CD4-positive, alpha-beta T cell (primary cell): ENCODE measurements at regions of chr17 and their contacts with region 1.

Region 1: DNA sequence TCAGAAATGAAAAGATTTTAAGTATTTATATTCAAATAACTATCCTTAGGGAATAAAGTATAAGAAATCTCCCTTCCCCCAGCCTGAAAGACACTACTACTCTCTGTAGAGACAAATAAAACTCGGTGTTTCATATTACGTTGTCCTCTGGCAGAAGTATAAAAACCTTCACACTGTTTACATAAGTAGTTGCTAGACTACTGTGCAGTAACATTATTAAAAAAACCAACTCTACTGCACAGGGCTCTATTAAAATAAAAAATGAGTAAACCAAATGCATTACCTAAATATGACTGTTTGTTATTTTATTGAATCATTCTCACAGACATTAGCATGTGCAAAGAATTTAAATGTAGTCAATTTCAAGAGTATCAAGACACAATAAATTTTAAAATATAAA is 67.4 kb downstream of the MED13 start:
- DNase-seq: no peak
- ATAC-seq: no peak
- H3K4me3 ChIP-seq: no peak overlapping the region
- H3K4me3 Mint-ChIP-seq: no peak overlapping the region
- H3K27ac ChIP-seq: no peak overlapping the region
- H3K27ac Mint-ChIP-seq: peak overlapping the region; percentile 22
- H3K4me1 ChIP-seq: no peaks in the 10 kb centered on the region
- H3K4me1 Mint-ChIP-seq: peaks cover 33% of the 10 kb centered on the region
- H3K27me3 ChIP-seq: no peaks in the 10 kb centered on the region
- H3K27me3 Mint-ChIP-seq: no peaks in the 10 kb centered on the region
- CTCF ChIP-seq: no peak

Region 2: DNA sequence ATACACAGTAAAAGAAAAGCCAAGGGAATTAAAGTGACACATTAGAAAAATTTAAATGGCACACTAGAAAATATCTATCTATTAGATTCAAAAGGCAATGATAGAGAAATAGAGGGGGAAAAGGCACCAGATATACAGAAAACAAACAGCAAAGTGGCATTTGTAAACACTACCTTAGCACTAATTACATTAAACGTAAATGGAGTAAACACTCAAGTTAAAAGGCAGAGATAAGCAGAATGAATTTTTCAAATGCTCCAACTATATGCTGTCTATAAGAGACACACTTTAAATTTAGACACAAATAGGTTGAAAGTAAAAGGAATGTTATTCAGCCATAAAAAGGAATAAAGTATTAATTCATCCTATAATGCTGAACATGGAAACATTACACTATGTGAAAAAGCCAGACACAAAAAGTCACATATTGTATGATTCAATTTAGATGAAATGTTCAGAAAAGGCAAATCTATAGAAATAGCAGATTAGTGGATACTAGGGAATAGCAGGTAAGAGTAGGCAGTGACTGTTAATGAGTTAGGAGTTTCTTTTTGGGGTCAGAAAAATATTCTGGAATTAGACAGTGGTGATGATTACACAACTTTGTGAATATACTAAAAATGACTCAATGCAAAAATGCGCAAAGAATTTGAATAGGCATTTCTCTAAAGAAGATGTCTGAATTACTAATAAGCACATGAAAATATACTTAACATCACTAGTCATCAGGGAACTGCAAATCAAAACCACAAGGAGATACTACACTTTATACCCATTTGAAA is 226.7 kb before region 1 on chr17:
- CTCF ChIA-PET with region 1: no interaction called
- POLR2A ChIA-PET with region 1: no interaction called
- intact Hi-C with region 1: no loop called
- DNase-seq: no peak
- ATAC-seq: no peak
- H3K4me3 ChIP-seq: no peak overlapping the region
- H3K4me3 Mint-ChIP-seq: no peak overlapping the region
- H3K27ac ChIP-seq: no peak overlapping the region
- H3K27ac Mint-ChIP-seq: no peak overlapping the region
- H3K4me1 ChIP-seq: no peaks in the 10 kb centered on the region
- H3K4me1 Mint-ChIP-seq: no peaks in the 10 kb centered on the region
- H3K27me3 ChIP-seq: no peaks in the 10 kb centered on the region
- H3K27me3 Mint-ChIP-seq: no peaks in the 10 kb centered on the region
- CTCF ChIP-seq: no peak

Region 3: DNA sequence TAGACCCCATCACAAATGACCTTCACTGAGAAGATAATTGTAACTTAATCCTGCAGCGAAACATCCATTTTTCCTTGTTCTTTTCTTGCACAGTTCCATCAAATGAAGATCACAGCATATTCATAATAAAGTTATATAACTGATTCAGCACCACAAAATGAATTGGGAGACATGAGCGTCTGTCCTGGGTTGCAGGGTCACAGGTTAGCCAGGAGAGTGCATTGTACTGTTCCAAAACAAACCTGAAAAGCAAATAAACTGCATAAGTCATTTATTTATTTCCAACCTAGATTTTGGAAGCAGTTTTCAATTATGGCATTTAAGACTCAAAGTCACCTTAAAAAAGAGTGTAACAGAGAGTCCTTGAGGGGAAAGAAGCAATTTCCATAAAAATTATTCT is 51.3 kb before region 1 on chr17:
- CTCF ChIA-PET with region 1: no interaction called
- POLR2A ChIA-PET with region 1: no interaction called
- intact Hi-C with region 1: no loop called
- DNase-seq: no peak
- ATAC-seq: no peak
- H3K4me3 ChIP-seq: no peak overlapping the region
- H3K4me3 Mint-ChIP-seq: no peak overlapping the region
- H3K27ac ChIP-seq: no peak overlapping the region
- H3K27ac Mint-ChIP-seq: peak overlapping the region; percentile 21
- H3K4me1 ChIP-seq: no peaks in the 10 kb centered on the region
- H3K4me1 Mint-ChIP-seq: no peaks in the 10 kb centered on the region
- H3K27me3 ChIP-seq: no peaks in the 10 kb centered on the region
- H3K27me3 Mint-ChIP-seq: no peaks in the 10 kb centered on the region
- CTCF ChIP-seq: no peak

Region 4: GRCh38 chr17:61986898-61987297 is 10.8 kb before region 1 on chr17:
- CTCF ChIA-PET with region 1: interaction called, 3 read pairs
- POLR2A ChIA-PET with region 1: no interaction called
- intact Hi-C with region 1: loop called in 1 of 2 experiments (anchors 1 kb)
- DNase-seq: no peak
- ATAC-seq: no peak
- H3K4me3 ChIP-seq: no peak overlapping the region
- H3K4me3 Mint-ChIP-seq: no peak overlapping the region
- H3K27ac ChIP-seq: no peak overlapping the region
- H3K27ac Mint-ChIP-seq: no peak overlapping the region
- H3K4me1 ChIP-seq: no peaks in the 10 kb centered on the region
- H3K4me1 Mint-ChIP-seq: peaks cover 8% of the 10 kb centered on the region
- H3K27me3 ChIP-seq: no peaks in the 10 kb centered on the region
- H3K27me3 Mint-ChIP-seq: no peaks in the 10 kb centered on the region
- CTCF ChIP-seq: no peak

Region 5: DNA sequence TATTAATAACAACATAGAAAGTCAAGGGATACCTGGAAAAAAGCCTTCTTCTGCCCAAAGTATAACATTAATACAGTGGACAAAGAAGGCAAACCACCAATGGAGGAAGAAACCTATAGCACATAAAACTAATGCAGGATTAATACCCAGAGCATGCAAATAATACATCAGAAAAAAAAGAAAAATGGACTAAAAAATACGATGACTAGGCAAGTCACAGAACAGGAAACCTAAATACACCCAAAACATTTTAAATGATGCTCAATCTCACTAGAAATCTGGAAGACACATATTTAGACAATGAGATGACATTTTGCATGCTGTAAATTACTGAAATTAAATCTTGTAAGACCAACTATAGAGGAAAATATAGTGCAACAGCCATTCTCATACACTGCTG is 11.6 kb after region 1 on chr17:
- CTCF ChIA-PET with region 1: interaction called, 5 read pairs
- POLR2A ChIA-PET with region 1: no interaction called
- intact Hi-C with region 1: loop called in 1 of 2 experiments (anchors 1 kb)
- DNase-seq: no peak
- ATAC-seq: no peak
- H3K4me3 ChIP-seq: no peak overlapping the region
- H3K4me3 Mint-ChIP-seq: no peak overlapping the region
- H3K27ac ChIP-seq: no peak overlapping the region
- H3K27ac Mint-ChIP-seq: peak overlapping the region; percentile 30
- H3K4me1 ChIP-seq: peaks cover 3% of the 10 kb centered on the region
- H3K4me1 Mint-ChIP-seq: peaks cover 34% of the 10 kb centered on the region
- H3K27me3 ChIP-seq: no peaks in the 10 kb centered on the region
- H3K27me3 Mint-ChIP-seq: no peaks in the 10 kb centered on the region
- CTCF ChIP-seq: no peak